ENCODE measurements at regions of chr14 and their contacts with region 1.

Region 1: DNA sequence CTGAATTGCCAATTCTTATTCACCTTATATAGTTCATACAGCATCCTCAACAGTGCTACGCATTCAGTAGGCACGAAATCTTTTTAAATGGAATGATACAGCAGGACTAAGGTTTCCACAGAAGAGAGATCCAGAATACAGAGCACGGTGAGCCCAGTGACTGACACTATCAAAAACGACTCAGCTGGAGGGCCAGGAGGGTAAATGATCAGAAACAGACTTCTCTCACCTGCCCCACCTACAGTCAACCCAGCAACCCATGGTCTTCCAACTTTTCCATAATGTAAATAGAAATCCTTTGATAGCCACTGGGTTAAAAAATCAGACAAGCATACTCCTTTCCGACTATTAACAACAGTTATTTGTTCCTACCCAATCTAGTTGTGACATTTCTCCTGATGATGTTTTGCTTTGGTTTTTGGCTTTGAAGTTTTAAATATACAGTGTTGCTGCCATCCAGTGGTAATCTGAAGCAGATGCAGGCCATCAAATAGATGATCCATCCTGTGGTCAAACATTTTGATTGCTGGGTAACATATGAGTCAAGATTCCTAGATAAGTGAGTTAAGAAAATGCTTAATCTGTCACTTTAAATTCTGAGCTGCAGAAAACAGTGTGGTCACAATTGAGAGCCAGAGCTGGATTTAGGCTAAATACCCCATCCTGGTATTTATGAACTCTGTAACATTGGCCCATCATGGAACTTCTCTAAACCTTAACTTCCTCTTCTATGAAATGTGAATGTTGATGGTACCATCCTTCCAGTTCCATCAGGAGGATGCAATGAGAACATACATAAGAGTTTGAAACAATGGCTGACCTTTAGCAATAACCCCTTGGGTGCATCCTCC is 42.0 kb downstream of the GPHB5 start:
- DNase-seq: peak; percentile 75
- H3K4me3 ChIP-seq: no peak overlapping the region
- H3K27ac ChIP-seq: no peak overlapping the region
- H3K4me1 ChIP-seq: peaks cover 3% of the 10 kb centered on the region
- H3K27me3 ChIP-seq: no peaks in the 10 kb centered on the region
- CTCF ChIP-seq: peak; percentile 91

Region 2: GRCh38 chr14:62162998-62163589 is 1113.6 kb before region 1 on chr14:
- CTCF ChIA-PET with region 1: no interaction called
- POLR2A ChIA-PET with region 1: no interaction called
- intact Hi-C with region 1: loop called (anchors 1 kb)
- DNase-seq: peak; percentile 74
- H3K4me3 ChIP-seq: no peak overlapping the region
- H3K27ac ChIP-seq: no peak overlapping the region
- H3K4me1 ChIP-seq: no peaks in the 10 kb centered on the region
- H3K27me3 ChIP-seq: no peaks in the 10 kb centered on the region
- CTCF ChIP-seq: peak; percentile 91

Region 3: DNA sequence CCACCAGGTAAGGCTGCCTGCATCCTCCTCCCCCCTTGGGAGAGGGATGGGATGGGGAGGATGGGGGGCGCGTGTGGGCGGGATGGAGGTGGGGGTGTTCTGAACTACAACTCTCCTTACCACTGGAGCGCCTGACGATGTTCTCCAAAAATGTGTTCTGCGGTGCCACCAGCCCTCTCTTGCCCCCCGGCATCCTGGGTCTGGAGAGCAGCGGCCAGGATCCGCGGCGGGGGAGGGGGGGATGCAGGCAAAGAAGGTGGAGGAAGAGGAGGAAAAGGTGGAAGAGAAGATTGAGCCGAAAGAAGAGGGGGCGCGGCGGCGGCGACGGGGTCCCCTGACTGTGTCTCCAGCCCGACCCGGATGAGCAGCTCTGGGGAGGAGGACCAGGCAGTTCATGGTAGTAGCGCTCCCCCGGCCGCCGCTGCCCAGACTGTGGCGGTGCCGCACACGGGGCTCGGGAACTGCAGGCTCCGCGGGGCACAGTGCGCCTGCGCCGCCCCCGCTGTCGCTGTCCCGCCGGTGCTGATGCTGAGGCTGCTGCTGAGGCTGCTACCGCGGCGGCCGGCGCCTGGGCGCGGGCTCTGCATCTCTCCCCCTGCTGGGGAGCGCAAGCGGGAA is 231.6 kb before region 1 on chr14 and contains the start of gene KCNH5:
- CTCF ChIA-PET with region 1: no interaction called
- POLR2A ChIA-PET with region 1: no interaction called
- intact Hi-C with region 1: loop called (anchors 10 kb)
- DNase-seq: peak; percentile 88
- H3K4me3 ChIP-seq: peak within 1 kb of the TSS; percentile 80
- H3K27ac ChIP-seq: no peak within 1 kb of the TSS
- H3K4me1 ChIP-seq: peaks cover 28% of the 10 kb centered on the region
- H3K27me3 ChIP-seq: no peaks in the 10 kb centered on the region
- CTCF ChIP-seq: no peak
- total RNA-seq, gene KCNH5: 27.9 and 31.8 TPM in 2 replicates

Region 4: GRCh38 chr14:63174760-63175211 is 101.9 kb before region 1 on chr14:
- CTCF ChIA-PET with region 1: no interaction called
- POLR2A ChIA-PET with region 1: no interaction called
- intact Hi-C with region 1: loop called (anchors 1 kb)
- DNase-seq: peak; percentile 75
- H3K4me3 ChIP-seq: no peak overlapping the region
- H3K27ac ChIP-seq: no peak overlapping the region
- H3K4me1 ChIP-seq: peaks cover 6% of the 10 kb centered on the region
- H3K27me3 ChIP-seq: no peaks in the 10 kb centered on the region
- CTCF ChIP-seq: peak; percentile 70